ENCODE measurements at regions of chr22 and their contacts with region 1.

Region 1: GRCh38 chr22:23281406-23282088 is 101.2 kb downstream of the BCR start:
- DNase-seq: peak; percentile 89
- ATAC-seq: peak; percentile 77
- H3K4me3 Mint-ChIP-seq: no peak overlapping the region
- H3K27ac Mint-ChIP-seq: peak overlapping the region; percentile 28
- H3K4me1 Mint-ChIP-seq: peaks cover 34% of the 10 kb centered on the region
- H3K27me3 Mint-ChIP-seq: no peaks in the 10 kb centered on the region

Region 2: DNA sequence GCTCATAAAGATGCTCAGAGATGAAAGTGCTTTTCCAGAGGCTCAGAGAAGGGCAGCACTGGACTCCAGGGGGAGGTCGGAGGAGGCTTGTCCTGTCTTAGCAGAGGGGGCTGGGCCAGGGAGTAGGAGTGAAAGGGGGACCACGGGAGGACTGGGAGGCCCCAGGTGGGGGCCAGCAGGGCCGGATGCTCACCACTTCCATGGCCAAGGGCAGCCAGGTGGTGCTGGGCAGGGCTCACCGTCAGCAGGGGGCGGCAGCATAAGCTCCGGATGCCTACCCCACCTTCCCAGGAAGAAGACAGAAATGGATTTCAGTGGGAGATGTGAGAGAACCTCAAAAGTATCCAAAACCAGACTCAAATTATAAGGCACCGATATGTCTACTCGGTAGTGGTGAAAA is 125.3 kb before region 1 on chr22:
- CTCF ChIA-PET with region 1: interaction called, 10 read pairs
- DNase-seq: no peak
- ATAC-seq: no peak
- H3K4me3 Mint-ChIP-seq: no peak overlapping the region
- H3K27ac Mint-ChIP-seq: no peak overlapping the region
- H3K4me1 Mint-ChIP-seq: peaks cover 8% of the 10 kb centered on the region
- H3K27me3 Mint-ChIP-seq: no peaks in the 10 kb centered on the region

Region 3: DNA sequence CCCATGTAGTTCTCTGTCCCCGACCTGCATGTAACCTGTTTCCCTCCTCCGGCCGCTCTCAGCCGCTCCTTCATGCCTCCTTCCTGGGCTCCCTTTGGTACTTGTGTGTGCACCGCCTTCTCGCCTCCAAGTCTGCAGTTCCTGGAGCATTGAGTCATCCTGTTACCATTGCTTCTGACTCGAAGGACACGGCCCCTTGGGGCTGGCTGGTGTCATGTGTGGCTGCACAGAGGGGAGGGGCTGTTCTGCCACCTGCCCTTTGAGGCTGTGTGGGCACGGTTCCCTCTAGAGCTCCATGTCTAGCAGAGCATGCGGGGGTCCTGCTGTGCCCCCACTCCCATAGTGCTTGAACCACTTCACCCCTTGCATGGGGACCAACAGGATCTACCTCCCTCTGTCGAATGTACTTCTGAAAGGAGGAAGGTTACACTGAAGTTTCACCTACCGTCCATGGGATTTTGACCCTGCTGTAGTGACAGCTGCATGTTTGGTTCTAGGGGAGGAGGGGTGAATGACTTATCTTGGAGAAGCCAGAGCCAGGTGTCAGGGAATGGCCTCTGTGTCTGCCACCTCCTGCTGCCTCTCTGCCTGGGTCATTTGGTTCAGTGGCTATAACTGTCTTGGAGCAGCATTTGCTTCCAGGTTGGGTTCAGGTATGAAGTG is 61.6 kb before region 1 on chr22:
- CTCF ChIA-PET with region 1: interaction called, 17 read pairs
- DNase-seq: peak; percentile 81
- ATAC-seq: peak; percentile 80
- H3K4me3 Mint-ChIP-seq: peak overlapping the region; percentile 24
- H3K27ac Mint-ChIP-seq: peak overlapping the region; percentile 54
- H3K4me1 Mint-ChIP-seq: peaks cover 63% of the 10 kb centered on the region
- H3K27me3 Mint-ChIP-seq: no peaks in the 10 kb centered on the region

Region 4: GRCh38 chr22:23270212-23270733 is 11.3 kb before region 1 on chr22:
- CTCF ChIA-PET with region 1: interaction called, 12 read pairs
- DNase-seq: no peak
- ATAC-seq: no peak
- H3K4me3 Mint-ChIP-seq: no peak overlapping the region
- H3K27ac Mint-ChIP-seq: peak overlapping the region; percentile 22
- H3K4me1 Mint-ChIP-seq: peaks cover 29% of the 10 kb centered on the region
- H3K27me3 Mint-ChIP-seq: no peaks in the 10 kb centered on the region